ENCODE measurements at regions of chr1 and their contacts with region 1.

Region 1: DNA sequence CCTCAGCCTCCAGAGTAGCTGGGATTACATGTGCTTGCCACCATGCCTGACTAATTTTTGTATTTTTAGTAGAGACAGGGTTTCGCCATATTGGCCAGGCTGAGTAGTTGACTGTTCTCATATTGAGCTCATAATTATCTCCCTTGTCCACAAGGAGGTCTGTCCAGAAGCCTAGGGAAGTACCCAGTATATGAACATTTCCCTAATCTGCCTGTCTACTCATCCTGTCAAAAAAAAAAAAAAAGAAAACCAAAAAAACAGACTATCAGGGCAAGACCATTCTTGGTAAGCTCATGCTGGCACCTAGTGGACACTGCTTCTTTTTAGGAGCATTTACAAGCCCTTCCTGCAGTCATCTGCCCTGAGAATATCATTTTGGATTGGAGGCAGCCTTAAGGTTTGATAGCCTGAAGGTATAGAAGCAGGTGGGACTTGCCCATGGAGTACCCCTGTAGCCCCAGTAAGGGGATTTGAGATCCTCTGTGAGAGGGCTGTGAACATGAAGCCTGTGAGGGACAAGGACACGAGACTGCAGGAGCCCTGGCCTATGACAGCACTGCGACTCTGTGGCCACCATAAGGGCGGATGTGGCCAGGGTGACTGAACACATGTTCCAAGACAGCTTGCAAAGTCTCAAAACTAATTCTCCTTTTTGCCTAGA is 10.8 kb upstream of the DUSP12 start:
- DNase-seq: peak; percentile 68
- H3K4me3 ChIP-seq: no peak overlapping the region
- H3K27ac ChIP-seq: no peak overlapping the region
- H3K4me1 ChIP-seq: peaks cover 5% of the 10 kb centered on the region
- H3K27me3 ChIP-seq: no peaks in the 10 kb centered on the region
- CTCF ChIP-seq: peak; percentile 60

Region 2: GRCh38 chr1:161201828-161202725 is 536.7 kb before region 1 on chr1 and contains the start of gene NDUFS2:
- CTCF ChIA-PET with region 1: no interaction called
- POLR2A ChIA-PET with region 1: no interaction called
- intact Hi-C with region 1: no loop called
- DNase-seq: peak; percentile 100
- H3K4me3 ChIP-seq: peak within 1 kb of the TSS; percentile 92
- H3K27ac ChIP-seq: peak within 1 kb of the TSS; percentile 87
- H3K4me1 ChIP-seq: peaks cover 39% of the 10 kb centered on the region
- H3K27me3 ChIP-seq: no peaks in the 10 kb centered on the region
- CTCF ChIP-seq: peak; percentile 48
- total RNA-seq, gene NDUFS2: 123 and 133 TPM in 2 replicates

Region 3: GRCh38 chr1:161486806-161487741 is 251.7 kb before region 1 on chr1:
- CTCF ChIA-PET with region 1: interaction called, 14 read pairs
- POLR2A ChIA-PET with region 1: no interaction called
- intact Hi-C with region 1: loop called (anchors 2 kb)
- DNase-seq: peak; percentile 83
- H3K4me3 ChIP-seq: peak overlapping the region; percentile 16
- H3K27ac ChIP-seq: no peak overlapping the region
- H3K4me1 ChIP-seq: no peaks in the 10 kb centered on the region
- H3K27me3 ChIP-seq: peaks cover 38% of the 10 kb centered on the region
- CTCF ChIP-seq: peak; percentile 86

Measured in A673 (cell line).